Natural killer cell (primary cell): ENCODE measurements at regions of chr1 and their contacts with region 1.

Region 1: DNA sequence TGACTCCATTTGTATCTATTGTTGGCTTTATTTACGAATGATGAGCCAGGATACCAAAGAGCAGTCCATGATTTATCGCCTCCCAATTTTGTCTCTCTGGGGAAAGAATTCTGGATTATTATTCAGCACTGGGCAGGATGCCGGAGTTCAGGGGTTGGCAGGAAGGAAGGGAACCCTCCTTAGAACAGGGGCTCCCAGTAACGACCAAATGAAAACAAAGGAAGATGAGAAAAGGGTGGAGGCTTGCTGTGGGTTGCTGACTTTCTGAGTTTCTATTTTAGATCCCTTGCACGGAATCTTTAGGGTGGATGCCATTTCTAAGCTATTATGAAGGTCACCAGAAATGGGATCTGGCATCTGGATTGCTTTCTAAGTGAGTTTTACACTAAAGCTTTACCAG is 231.2 kb upstream of the LYPLAL1 start:
- DNase-seq: no peak
- ATAC-seq: no peak
- H3K4me3 ChIP-seq: no peak overlapping the region
- H3K4me3 Mint-ChIP-seq: no peak overlapping the region
- H3K27ac ChIP-seq: no peak overlapping the region
- H3K27ac Mint-ChIP-seq: no peak overlapping the region
- H3K4me1 ChIP-seq: no peaks in the 10 kb centered on the region
- H3K4me1 Mint-ChIP-seq: no peaks in the 10 kb centered on the region
- H3K27me3 ChIP-seq: no peaks in the 10 kb centered on the region
- H3K27me3 Mint-ChIP-seq: no peaks in the 10 kb centered on the region
- CTCF ChIP-seq: no peak

Region 2: GRCh38 chr1:218917656-218918055 is 24.8 kb before region 1 on chr1:
- intact Hi-C with region 1: loop called (anchors 2 kb)
- DNase-seq: no peak
- ATAC-seq: no peak
- H3K4me3 ChIP-seq: no peak overlapping the region
- H3K4me3 Mint-ChIP-seq: no peak overlapping the region
- H3K27ac ChIP-seq: no peak overlapping the region
- H3K27ac Mint-ChIP-seq: no peak overlapping the region
- H3K4me1 ChIP-seq: no peaks in the 10 kb centered on the region
- H3K4me1 Mint-ChIP-seq: no peaks in the 10 kb centered on the region
- H3K27me3 ChIP-seq: no peaks in the 10 kb centered on the region
- H3K27me3 Mint-ChIP-seq: no peaks in the 10 kb centered on the region
- CTCF ChIP-seq: no peak